ENCODE measurements at regions of chr12 and their contacts with region 1.

Region 1: DNA sequence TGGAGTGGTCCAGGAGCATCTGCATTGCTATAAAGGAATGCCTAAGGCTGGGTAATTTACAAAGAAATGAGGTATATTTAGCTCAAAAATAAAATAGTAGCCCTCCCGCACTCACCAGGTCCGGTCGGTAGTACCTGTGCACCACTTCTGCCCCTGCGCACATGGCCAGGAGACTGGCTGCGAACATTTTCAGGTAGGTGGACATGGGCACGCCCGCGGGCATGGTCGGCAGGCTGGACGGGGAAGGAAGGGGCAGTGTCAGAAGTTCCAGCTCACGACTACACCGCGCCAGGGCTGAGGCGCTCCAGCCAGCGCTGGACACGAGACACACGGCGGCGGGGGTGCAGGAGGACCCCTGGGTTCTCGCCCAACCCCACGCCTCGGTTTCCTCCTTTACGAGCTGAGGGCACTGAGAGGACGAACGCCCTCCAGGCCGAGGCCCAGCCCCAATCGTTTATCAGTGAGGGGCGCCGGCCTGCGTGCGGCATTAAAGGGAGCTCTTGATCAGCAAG is 9.1 kb upstream of the TDG start:
- DNase-seq: no peak
- ATAC-seq: peak; percentile 52
- H3K4me3 ChIP-seq: peak overlapping the region; percentile 72
- H3K27ac ChIP-seq: peak overlapping the region; percentile 90
- H3K4me1 ChIP-seq: peaks cover 3% of the 10 kb centered on the region; the same call in 1 of the 2 replicates
- H3K27me3 ChIP-seq: no peaks in the 10 kb centered on the region
- CTCF ChIP-seq: no peak
- POLR2A ChIP-seq: no peak
- RAD21 ChIP-seq: no peak

Region 2: DNA sequence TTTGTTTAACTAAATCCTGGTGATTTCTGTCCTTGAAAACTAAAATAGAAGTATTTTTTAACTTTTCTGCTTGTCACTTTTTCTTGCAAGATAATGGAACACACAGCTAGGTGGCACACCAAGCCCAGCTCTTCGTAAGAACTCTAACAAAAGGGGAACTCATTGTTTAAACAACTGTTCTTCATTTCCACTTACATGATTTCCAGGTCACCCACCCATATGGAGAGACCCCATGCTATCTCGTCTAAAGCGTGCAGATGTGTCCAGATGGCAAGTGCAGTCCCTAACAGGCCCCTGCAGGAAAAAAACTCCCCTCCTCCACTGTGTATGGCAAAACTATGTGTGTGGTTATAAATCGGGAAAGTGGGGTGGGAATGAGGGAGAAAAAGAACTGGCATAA is 72.3 kb before region 1 on chr12:
- CTCF ChIA-PET with region 1: no interaction called
- POLR2A ChIA-PET with region 1: no interaction called
- dilution Hi-C with region 1: no loop called
- in situ Hi-C with region 1: no loop called
- intact Hi-C with region 1: loop called (anchors 1 kb)
- DNase-seq: peak; percentile 76
- ATAC-seq: peak; percentile 59; the same call in 1 of the 2 replicates
- H3K4me3 ChIP-seq: no peak overlapping the region
- H3K27ac ChIP-seq: no peak overlapping the region
- H3K4me1 ChIP-seq: no peaks in the 10 kb centered on the region
- H3K27me3 ChIP-seq: no peaks in the 10 kb centered on the region
- CTCF ChIP-seq: peak; percentile 72
- POLR2A ChIP-seq: no peak
- RAD21 ChIP-seq: peak; percentile 83

Region 3: GRCh38 chr12:104026841-104027599 is 70.4 kb after region 1 on chr12:
- CTCF ChIA-PET with region 1: no interaction called
- POLR2A ChIA-PET with region 1: no interaction called
- dilution Hi-C with region 1: no loop called
- in situ Hi-C with region 1: no loop called
- intact Hi-C with region 1: loop called (anchors 2 kb)
- DNase-seq: no peak
- ATAC-seq: no peak
- H3K4me3 ChIP-seq: no peak overlapping the region
- H3K27ac ChIP-seq: no peak overlapping the region
- H3K4me1 ChIP-seq: no peaks in the 10 kb centered on the region
- H3K27me3 ChIP-seq: no peaks in the 10 kb centered on the region
- CTCF ChIP-seq: no peak
- POLR2A ChIP-seq: no peak
- RAD21 ChIP-seq: no peak